Testis (tissue), 5 donors: ENCODE measurements at regions of chr3 and their contacts with region 1.

Region 1: GRCh38 chr3:123335007-123335670 is 113.8 kb downstream of the ADCY5 start:
- DNase-seq: no peak
- H3K4me3 ChIP-seq: no peak overlapping the region
- H3K27ac ChIP-seq: peak overlapping the region in 1 of 2 donors; percentile 25
- H3K4me1 ChIP-seq: peaks cover 27% of the 10 kb centered on the region
- H3K27me3 ChIP-seq: no peaks in the 10 kb centered on the region
- CTCF ChIP-seq: no peak
- POLR2A ChIP-seq: no peak

Region 2: GRCh38 chr3:123449102-123449996 is 114.2 kb after region 1 on chr3:
- intact Hi-C with region 1: loop called (anchors 10 kb)
- DNase-seq: peak; percentile 40
- H3K4me3 ChIP-seq: peak overlapping the region; percentile 75 to 78
- H3K27ac ChIP-seq: peak overlapping the region; percentile 94 to 95
- H3K4me1 ChIP-seq: peaks cover 9% of the 10 kb centered on the region
- H3K27me3 ChIP-seq: no peaks in the 10 kb centered on the region
- CTCF ChIP-seq: no peak
- POLR2A ChIP-seq: no peak